ENCODE measurements at regions of chr6 and their contacts with region 1.

Region 1: GRCh38 chr6:30914076-30914853 is at the start of gene VARS2:
- DNase-seq: peak; percentile 92
- ATAC-seq: peak; percentile 96
- H3K4me3 ChIP-seq: peak within 1 kb of the TSS; percentile 27 to 84 (median 78)
- H3K4me3 Mint-ChIP-seq: peak within 1 kb of the TSS; percentile 90
- H3K27ac ChIP-seq: peak within 1 kb of the TSS; percentile 24 to 78
- H3K27ac Mint-ChIP-seq: peak within 1 kb of the TSS; percentile 88
- H3K4me1 ChIP-seq: peaks cover 11 to 20% of the 10 kb centered on the region in 2 donors
- H3K4me1 Mint-ChIP-seq: peaks cover 24% of the 10 kb centered on the region
- H3K27me3 ChIP-seq: no peaks in the 10 kb centered on the region
- H3K27me3 Mint-ChIP-seq: no peaks in the 10 kb centered on the region
- CTCF ChIP-seq: peak; percentile 20
- total RNA-seq, gene VARS2: 41.0 and 41.6 TPM in 2 replicates

Region 2: GRCh38 chr6:30244560-30244959 is 669.7 kb before region 1 on chr6:
- CTCF ChIA-PET with region 1: no interaction called
- POLR2A ChIA-PET with region 1: no interaction called
- intact Hi-C with region 1: no loop called
- DNase-seq: no peak
- ATAC-seq: no peak
- H3K4me3 ChIP-seq: no peak overlapping the region
- H3K4me3 Mint-ChIP-seq: no peak overlapping the region
- H3K27ac ChIP-seq: no peak overlapping the region
- H3K27ac Mint-ChIP-seq: no peak overlapping the region
- H3K4me1 ChIP-seq: no peaks in the 10 kb centered on the region
- H3K4me1 Mint-ChIP-seq: no peaks in the 10 kb centered on the region
- H3K27me3 ChIP-seq: peaks cover 0 to 5% (median 3%) of the 10 kb centered on the region in 4 experiments
- H3K27me3 Mint-ChIP-seq: peaks cover 30% of the 10 kb centered on the region
- CTCF ChIP-seq: no peak

Region 3: DNA sequence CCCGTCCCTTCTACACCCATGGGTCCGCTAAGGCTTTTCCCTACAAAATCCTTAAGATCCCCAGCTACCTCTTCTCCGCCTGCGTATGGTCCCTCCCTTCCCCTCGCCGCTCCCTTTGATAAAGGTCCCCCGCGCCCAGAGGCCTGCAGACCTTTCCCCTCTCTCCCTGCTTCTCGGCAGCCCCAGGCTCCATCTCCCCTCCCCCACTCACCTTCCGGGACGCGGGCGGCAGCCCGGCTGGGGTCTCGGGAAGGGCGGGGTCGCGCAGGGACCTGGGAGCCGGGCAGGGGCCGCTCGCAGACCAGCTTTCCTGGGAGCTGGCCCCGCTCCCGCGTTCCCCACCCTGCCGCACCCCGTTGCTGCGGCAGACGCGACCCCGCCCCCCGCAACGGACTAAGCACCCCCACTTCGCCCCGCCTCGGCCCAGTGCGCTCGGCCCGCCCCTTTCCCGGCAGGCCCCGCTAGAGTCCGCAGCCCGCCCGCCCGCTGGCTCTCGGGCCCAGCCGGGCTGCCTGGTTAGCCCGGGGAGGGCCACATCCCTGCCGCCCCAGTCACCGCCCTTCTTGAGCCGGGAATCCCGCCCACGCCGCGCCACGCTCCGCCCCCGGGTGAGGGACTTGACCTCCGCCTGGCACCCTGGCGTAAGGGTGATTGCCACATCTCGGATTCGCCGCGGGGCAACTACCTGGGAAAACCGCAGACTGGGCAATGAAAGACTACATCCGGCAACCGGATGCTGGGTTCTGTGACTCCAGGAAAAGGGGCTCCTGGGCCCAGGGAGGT is 171.8 kb before region 1 on chr6 and contains the start of gene FLOT1:
- CTCF ChIA-PET with region 1: interaction called, 3 read pairs
- POLR2A ChIA-PET with region 1: no interaction called
- intact Hi-C with region 1: loop called (anchors 5 kb)
- DNase-seq: peak; percentile 85
- ATAC-seq: peak; percentile 90
- H3K4me3 ChIP-seq: peak within 1 kb of the TSS; percentile 56 to 82 (median 63)
- H3K4me3 Mint-ChIP-seq: peak within 1 kb of the TSS; percentile 87
- H3K27ac ChIP-seq: peak within 1 kb of the TSS in 1 of 2 donors; percentile 61
- H3K27ac Mint-ChIP-seq: peak within 1 kb of the TSS; percentile 77
- H3K4me1 ChIP-seq: peaks cover 18 to 35% of the 10 kb centered on the region in 2 donors
- H3K4me1 Mint-ChIP-seq: peaks cover 46% of the 10 kb centered on the region
- H3K27me3 ChIP-seq: no peaks in the 10 kb centered on the region
- H3K27me3 Mint-ChIP-seq: no peaks in the 10 kb centered on the region
- CTCF ChIP-seq: no peak
- total RNA-seq, gene FLOT1: 71.2 and 75.7 TPM in 2 replicates

Region 4: DNA sequence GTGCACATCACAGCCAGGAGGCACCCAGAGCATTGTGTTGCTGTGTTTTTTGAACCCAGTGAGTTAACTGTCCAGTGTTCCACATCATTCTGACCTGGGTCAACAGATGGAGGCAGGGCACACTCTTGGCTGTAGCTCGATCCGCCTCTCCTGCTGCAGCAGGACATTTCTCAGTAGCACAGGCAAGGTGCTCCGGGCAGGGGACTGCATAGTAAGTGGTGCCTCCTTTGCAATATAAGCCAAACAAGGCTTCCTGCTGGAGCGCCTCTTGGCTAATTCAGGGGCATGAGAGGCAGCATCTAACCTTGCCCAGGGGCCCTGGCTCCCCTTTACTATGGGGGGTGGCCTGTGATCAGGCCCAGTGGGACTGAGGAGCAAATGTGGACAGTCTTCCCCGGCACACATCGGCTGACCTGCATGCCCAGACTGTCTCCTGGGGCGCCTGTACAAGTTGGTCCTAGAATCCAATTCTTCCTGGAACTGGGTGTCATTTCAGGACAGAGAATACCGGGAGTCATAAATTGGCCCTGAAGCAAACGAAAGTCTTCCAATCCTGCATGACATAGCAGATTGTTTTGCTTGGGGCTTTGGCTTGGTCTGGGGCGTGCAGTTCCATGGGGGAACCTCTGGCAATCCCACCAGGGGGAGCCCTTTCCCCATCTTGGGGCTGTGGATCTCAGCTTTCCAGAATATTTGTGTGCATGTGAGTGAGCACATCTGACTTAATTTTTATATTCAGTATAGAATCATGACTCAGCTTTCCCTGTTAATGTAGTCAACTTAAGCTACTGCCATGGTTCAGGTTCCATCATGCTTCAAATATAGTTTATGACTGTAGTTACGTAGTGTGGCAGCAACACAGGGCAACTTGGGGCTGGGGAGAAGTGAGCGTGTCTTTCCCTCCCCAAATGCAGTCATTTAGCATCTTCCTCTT is 86.0 kb before region 1 on chr6:
- CTCF ChIA-PET with region 1: interaction called, 87 read pairs
- POLR2A ChIA-PET with region 1: no interaction called
- intact Hi-C with region 1: loop called (anchors 1 kb)
- DNase-seq: peak; percentile 77
- ATAC-seq: peak; percentile 92
- H3K4me3 ChIP-seq: no peak overlapping the region
- H3K4me3 Mint-ChIP-seq: no peak overlapping the region
- H3K27ac ChIP-seq: no peak overlapping the region
- H3K27ac Mint-ChIP-seq: no peak overlapping the region
- H3K4me1 ChIP-seq: peaks cover 7 to 23% of the 10 kb centered on the region in 2 donors
- H3K4me1 Mint-ChIP-seq: peaks cover 24% of the 10 kb centered on the region
- H3K27me3 ChIP-seq: no peaks in the 10 kb centered on the region
- H3K27me3 Mint-ChIP-seq: peaks cover 12% of the 10 kb centered on the region
- CTCF ChIP-seq: peak; percentile 89

Region 5: DNA sequence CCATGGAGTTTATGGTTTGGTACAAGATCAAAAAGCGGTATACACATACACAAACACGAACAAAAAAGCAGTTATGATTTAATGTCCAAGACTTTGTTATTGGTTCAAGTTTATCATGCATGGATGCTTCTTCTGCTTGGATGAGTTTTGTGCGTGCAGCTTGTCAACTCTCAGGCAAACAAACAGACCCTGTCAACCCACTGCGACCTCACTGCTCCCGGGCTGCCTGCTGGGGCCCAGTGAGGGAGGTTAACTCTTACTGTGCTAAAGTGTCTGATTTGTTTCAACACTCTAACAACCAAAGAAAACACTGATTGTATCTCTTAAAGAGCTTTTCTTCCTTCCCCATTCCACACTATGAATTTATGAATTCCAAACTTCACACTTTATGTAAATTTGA is 56.7 kb before region 1 on chr6:
- CTCF ChIA-PET with region 1: no interaction called
- POLR2A ChIA-PET with region 1: no interaction called
- intact Hi-C with region 1: no loop called
- DNase-seq: no peak
- ATAC-seq: no peak
- H3K4me3 ChIP-seq: no peak overlapping the region
- H3K4me3 Mint-ChIP-seq: no peak overlapping the region
- H3K27ac ChIP-seq: no peak overlapping the region
- H3K27ac Mint-ChIP-seq: peak overlapping the region; percentile 32
- H3K4me1 ChIP-seq: no peaks in the 10 kb centered on the region
- H3K4me1 Mint-ChIP-seq: peaks cover 9% of the 10 kb centered on the region
- H3K27me3 ChIP-seq: peaks cover 0 to 8% (median 0%) of the 10 kb centered on the region in 4 experiments
- H3K27me3 Mint-ChIP-seq: peaks cover 30% of the 10 kb centered on the region
- CTCF ChIP-seq: no peak

Region 6: DNA sequence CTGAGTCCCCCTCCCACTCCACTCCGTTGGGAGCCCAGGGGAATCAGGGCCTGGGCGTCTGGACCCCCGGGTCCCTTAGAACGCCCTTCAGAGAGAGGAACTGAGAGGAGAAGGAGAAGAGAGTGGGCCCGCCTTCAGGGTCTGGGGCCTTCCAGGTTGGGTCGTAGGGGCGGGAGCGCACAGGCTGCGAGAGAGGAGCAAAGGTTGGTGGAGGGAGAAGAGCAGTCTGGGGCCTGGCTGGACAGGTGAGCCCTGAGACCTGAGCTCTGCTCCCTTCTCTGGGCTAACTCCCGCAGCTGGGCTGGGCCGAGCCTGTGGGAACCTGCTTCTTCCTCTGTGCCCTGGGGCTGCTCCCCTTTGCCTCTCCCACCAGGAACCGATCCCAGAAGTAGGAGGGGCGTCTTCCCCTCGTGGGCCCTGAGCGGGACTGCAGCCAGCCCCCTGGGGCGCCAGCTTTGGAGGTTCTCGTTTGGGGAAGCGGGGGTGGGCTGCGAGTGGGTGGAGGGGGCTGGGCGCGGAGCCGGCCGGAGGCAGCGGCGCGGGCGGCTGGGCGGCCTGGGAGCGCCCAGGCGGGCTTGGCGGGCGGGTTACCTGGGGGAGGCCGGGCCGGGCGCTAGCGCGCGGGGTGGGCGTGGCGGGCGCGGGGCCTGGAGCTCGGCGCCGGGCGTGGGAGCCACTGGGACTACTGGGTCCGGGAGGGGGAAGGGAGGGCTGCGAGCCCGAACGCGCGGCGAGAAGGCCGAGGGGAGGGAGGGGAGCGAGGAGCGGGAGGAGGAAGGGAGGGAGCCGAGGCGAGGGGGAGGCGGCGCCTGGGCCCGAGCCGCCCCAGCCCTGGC is 30.4 kb before region 1 on chr6 and contains the start of gene DDR1:
- CTCF ChIA-PET with region 1: interaction called, 26 read pairs
- POLR2A ChIA-PET with region 1: interaction called, 18 read pairs
- intact Hi-C with region 1: loop called (anchors 2 kb)
- DNase-seq: peak; percentile 63
- ATAC-seq: peak; percentile 54
- H3K4me3 ChIP-seq: peak within 1 kb of the TSS; percentile 26 to 65 (median 60)
- H3K4me3 Mint-ChIP-seq: peak within 1 kb of the TSS; percentile 83
- H3K27ac ChIP-seq: peak within 1 kb of the TSS; percentile 66 to 81
- H3K27ac Mint-ChIP-seq: peak within 1 kb of the TSS; percentile 90
- H3K4me1 ChIP-seq: peaks cover 53 to 56% of the 10 kb centered on the region in 2 donors
- H3K4me1 Mint-ChIP-seq: peaks cover 64% of the 10 kb centered on the region
- H3K27me3 ChIP-seq: no peaks in the 10 kb centered on the region
- H3K27me3 Mint-ChIP-seq: no peaks in the 10 kb centered on the region
- CTCF ChIP-seq: no peak
- total RNA-seq, gene DDR1: 61.7 and 66.0 TPM in 2 replicates

Region 7: DNA sequence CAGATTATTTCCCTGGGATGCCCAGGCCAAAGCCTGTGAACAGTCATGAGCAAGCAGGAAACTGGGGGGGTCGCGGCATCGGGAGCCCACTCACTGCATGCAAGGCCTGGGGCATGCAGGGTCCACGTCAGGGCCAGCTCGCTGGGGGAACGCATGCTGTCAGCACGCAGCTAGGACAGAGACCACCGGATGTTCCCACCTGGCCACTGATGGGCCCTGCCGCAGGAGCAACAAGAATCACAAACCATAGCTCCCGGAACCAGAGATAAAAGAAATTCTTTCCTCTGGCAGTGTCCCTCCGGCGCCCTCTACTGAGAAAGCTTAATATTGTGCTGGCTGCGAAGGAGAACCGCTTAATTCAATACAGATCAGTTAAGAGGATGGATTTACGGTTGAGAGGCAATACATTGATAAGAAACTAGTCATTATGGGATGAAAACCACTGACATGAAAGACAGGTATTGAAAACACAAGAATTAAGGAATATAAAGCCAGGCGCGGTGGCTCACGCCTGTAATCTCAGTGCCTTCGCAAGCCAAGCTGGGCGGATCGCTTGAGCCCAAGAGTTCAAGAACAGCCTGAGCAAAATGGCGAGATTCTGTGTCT is 165.5 kb after region 1 on chr6:
- CTCF ChIA-PET with region 1: interaction called, 68 read pairs
- POLR2A ChIA-PET with region 1: no interaction called
- intact Hi-C with region 1: loop called (anchors 2 kb)
- DNase-seq: peak; percentile 77
- ATAC-seq: peak; percentile 82
- H3K4me3 ChIP-seq: peak overlapping the region in 3 of 5 experiments; percentile 23 to 43 (median 34)
- H3K4me3 Mint-ChIP-seq: peak overlapping the region; percentile 73
- H3K27ac ChIP-seq: no peak overlapping the region
- H3K27ac Mint-ChIP-seq: no peak overlapping the region
- H3K4me1 ChIP-seq: peaks cover 4 to 5% of the 10 kb centered on the region in 2 donors
- H3K4me1 Mint-ChIP-seq: peaks cover 4% of the 10 kb centered on the region
- H3K27me3 ChIP-seq: no peaks in the 10 kb centered on the region
- H3K27me3 Mint-ChIP-seq: peaks cover 9% of the 10 kb centered on the region
- CTCF ChIP-seq: peak; percentile 94

Measured in B cell (primary cell).